GM10248 (cell line): ENCODE measurements at regions of chr9 and their contacts with region 1.

Region 1: DNA sequence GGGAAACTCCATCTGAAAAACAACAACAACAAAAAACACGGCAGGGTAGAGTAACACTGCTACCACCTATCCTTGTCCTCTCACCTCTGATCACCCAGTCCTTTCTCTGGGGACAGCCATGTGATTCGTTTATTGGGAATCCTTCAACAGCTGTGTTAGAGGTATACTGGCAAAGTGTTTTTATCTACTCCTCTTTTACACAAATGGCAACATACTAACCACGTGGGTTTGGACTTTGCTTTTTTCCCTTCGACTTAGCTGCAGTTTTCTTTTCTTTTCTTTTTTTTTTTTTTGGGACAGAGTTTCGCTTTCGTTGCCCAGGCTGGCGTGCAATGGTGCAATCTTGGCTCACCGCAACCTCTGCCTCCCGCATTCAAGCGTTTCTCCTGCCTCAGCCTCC is 11.2 kb upstream of the SET start:
- DNase-seq: no peak
- CTCF ChIP-seq: no peak

Region 2: GRCh38 chr9:128653941-128654340 is 23.9 kb before region 1 on chr9:
- CTCF ChIA-PET with region 1: interaction called, 3 read pairs
- POLR2A ChIA-PET with region 1: interaction called, 11 read pairs
- DNase-seq: no peak
- CTCF ChIP-seq: no peak

Region 3: GRCh38 chr9:128723866-128724743 is 46.3 kb after region 1 on chr9 and contains the start of gene ZDHHC12:
- CTCF ChIA-PET with region 1: no interaction called
- POLR2A ChIA-PET with region 1: no interaction called
- DNase-seq: peak; percentile 100
- CTCF ChIP-seq: no peak